ENCODE measurements at regions of chr14 and their contacts with region 1.

Region 1: DNA sequence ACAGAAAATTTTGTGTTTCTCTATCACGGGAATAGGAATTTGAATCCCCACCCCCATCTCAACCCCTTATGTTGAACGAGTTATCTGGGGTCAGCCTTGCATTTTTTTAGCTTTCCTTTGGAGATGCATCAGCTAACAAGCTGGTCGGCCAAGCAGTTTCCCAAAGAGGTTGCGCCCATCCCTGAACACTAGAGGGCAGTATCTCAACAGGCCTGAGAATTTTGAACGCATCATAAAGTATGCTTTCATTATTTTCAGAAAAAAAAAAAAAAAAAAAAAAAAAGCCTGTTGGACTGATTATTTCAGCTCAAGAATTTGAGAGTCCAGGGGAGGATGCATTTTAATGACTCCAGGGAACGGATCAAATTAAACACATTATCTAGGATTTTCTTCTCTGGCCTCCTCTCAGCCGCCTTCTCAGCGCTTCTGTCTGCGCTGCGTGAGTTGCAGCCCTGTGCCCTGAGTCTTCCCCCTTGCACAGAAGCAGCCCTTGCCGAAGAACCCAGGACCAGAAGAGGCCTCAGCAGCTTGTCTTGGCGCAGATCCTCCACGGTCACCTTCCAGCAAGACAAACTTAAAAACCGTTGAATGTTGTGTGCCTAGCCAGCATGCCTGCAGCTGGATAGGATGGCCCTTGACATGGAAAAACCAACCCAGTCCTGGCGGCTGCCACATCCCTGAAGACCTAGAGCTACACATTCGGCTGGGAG is 76.6 kb upstream of the GZMB start:
- DNase-seq: peak in 1 of 2 experiments; percentile 41
- H3K4me3 ChIP-seq: no peak overlapping the region
- H3K27ac ChIP-seq: no peak overlapping the region
- H3K4me1 ChIP-seq: no peaks in the 10 kb centered on the region
- H3K27me3 ChIP-seq: no peaks in the 10 kb centered on the region
- CTCF ChIP-seq: peak; percentile 75

Region 2: DNA sequence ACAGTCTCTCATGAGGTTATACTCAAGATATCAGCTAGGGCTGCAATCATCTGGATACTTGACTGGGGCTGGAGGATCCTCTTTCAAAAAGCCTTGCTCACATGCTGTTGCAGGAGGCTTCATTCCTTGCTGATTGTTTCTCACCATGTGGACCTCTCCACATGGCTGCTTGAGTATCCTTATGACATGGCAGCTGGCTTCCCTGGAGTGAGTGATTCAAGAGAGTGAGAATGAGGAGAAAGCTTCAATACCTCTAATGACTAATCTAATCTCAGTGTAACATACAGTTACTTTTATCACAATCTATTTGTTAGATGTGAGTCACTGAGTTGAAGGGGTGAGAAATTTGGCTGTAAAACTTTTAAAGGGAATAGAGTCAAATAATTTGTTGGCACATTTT is 253.6 kb before region 1 on chr14:
- CTCF ChIA-PET with region 1: interaction called, 11 read pairs
- POLR2A ChIA-PET with region 1: no interaction called
- intact Hi-C with region 1: no loop called
- DNase-seq: no peak
- H3K4me3 ChIP-seq: no peak overlapping the region
- H3K27ac ChIP-seq: no peak overlapping the region
- H3K4me1 ChIP-seq: no peaks in the 10 kb centered on the region
- H3K27me3 ChIP-seq: no peaks in the 10 kb centered on the region
- CTCF ChIP-seq: no peak

Region 3: DNA sequence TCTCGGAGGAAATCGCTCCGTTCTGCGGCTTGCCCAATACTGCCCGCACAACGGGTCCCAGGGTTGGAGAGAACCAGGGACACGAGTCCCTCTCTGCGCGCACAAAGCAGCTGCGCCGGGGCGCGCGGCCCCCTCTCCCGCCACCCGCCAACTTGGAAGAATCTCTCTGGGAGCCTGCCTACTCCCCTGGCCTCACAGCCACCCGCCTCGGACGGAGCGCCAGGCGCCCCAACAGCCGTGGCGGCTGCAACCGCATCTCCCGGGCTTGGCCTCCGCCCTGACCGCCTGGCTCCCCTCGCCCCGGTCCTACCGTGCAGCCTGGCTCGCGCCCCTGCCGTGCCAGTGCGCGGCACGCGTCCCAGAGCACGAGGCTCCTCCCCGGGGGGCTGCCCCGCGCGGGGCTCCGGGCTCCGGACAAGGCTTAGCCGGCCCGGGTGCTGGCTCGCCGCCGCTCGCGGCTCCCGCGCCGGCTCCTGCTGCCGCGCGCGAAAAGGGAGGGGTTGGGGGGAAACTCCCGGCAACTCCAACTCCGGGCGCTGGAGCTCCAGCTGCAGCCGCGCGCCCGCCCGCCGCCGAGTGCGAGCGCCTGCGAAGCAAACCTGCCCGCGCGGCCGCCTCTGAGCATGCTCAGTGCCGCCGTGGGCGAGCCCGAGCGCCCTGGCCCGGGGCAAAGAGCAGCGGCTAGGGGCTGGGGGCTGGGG is 339.2 kb after region 1 on chr14 and contains the start of gene STXBP6:
- CTCF ChIA-PET with region 1: interaction called, 10 read pairs
- POLR2A ChIA-PET with region 1: no interaction called
- intact Hi-C with region 1: no loop called
- DNase-seq: peak in 1 of 2 experiments; percentile 66
- H3K4me3 ChIP-seq: peak within 1 kb of the TSS; percentile 52
- H3K27ac ChIP-seq: no peak within 1 kb of the TSS
- H3K4me1 ChIP-seq: no peaks in the 10 kb centered on the region
- H3K27me3 ChIP-seq: peaks cover 33% of the 10 kb centered on the region
- CTCF ChIP-seq: no peak
- total RNA-seq, gene STXBP6: 10.0 and 12.3 TPM in 2 replicates

Region 4: GRCh38 chr14:25237845-25238244 is 527.3 kb after region 1 on chr14:
- CTCF ChIA-PET with region 1: no interaction called
- POLR2A ChIA-PET with region 1: no interaction called
- intact Hi-C with region 1: loop called (anchors 2 kb)
- DNase-seq: peak in 1 of 2 experiments; percentile 8
- H3K4me3 ChIP-seq: no peak overlapping the region
- H3K27ac ChIP-seq: no peak overlapping the region
- H3K4me1 ChIP-seq: no peaks in the 10 kb centered on the region
- H3K27me3 ChIP-seq: no peaks in the 10 kb centered on the region
- CTCF ChIP-seq: no peak

Region 5: GRCh38 chr14:25400607-25401206 is 690.1 kb after region 1 on chr14:
- CTCF ChIA-PET with region 1: no interaction called
- POLR2A ChIA-PET with region 1: no interaction called
- intact Hi-C with region 1: loop called (anchors 2 kb)
- DNase-seq: peak; percentile 16 to 40
- H3K4me3 ChIP-seq: no peak overlapping the region
- H3K27ac ChIP-seq: no peak overlapping the region
- H3K4me1 ChIP-seq: no peaks in the 10 kb centered on the region
- H3K27me3 ChIP-seq: no peaks in the 10 kb centered on the region
- CTCF ChIP-seq: peak; percentile 68